T-cell (primary cell): ENCODE measurements at regions of chr4 and their contacts with region 1.

Region 1: GRCh38 chr4:150668824-150669223 is 86.9 kb downstream of the MAB21L2 start:
- DNase-seq: no peak
- ATAC-seq: no peak
- H3K4me3 ChIP-seq: no peak overlapping the region
- H3K4me3 Mint-ChIP-seq: no peak overlapping the region
- H3K27ac ChIP-seq: no peak overlapping the region
- H3K27ac Mint-ChIP-seq: no peak overlapping the region
- H3K4me1 ChIP-seq: no peaks in the 10 kb centered on the region
- H3K4me1 Mint-ChIP-seq: peaks cover 0 to 2% (median 0%) of the 10 kb centered on the region in 3 donors
- H3K27me3 ChIP-seq: no peaks in the 10 kb centered on the region
- H3K27me3 Mint-ChIP-seq: no peaks in the 10 kb centered on the region

Region 2: DNA sequence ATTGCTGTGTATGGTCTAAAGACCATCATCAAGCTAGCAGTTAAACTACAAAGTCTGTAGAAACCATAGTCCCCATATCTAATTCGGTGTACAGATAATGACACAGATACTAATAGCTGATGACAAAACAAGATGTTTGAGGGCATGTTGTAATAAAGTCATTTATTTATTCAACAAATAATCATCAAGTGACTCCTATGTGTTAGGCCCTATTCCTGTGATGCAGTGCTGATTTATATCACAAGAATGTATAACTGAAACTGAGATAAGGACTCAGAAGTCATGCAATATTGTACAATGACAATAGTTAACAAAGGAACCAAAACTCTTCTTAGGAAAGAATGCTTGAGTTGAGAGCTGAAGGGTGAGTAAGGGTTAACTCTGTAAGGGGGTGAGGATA is 1911.7 kb before region 1 on chr4:
- CTCF ChIA-PET with region 1: no interaction called
- POLR2A ChIA-PET with region 1: no interaction called
- DNase-seq: no peak
- ATAC-seq: no peak
- H3K4me3 ChIP-seq: no peak overlapping the region
- H3K4me3 Mint-ChIP-seq: no peak overlapping the region
- H3K27ac ChIP-seq: no peak overlapping the region
- H3K27ac Mint-ChIP-seq: no peak overlapping the region
- H3K4me1 ChIP-seq: no peaks in the 10 kb centered on the region
- H3K4me1 Mint-ChIP-seq: no peaks in the 10 kb centered on the region
- H3K27me3 ChIP-seq: no peaks in the 10 kb centered on the region
- H3K27me3 Mint-ChIP-seq: no peaks in the 10 kb centered on the region

Region 3: GRCh38 chr4:150368667-150369066 is 300.2 kb before region 1 on chr4:
- CTCF ChIA-PET with region 1: no interaction called
- POLR2A ChIA-PET with region 1: interaction called in 1 of 2 experiments, 18 read pairs
- DNase-seq: no peak
- ATAC-seq: no peak
- H3K4me3 ChIP-seq: no peak overlapping the region
- H3K4me3 Mint-ChIP-seq: no peak overlapping the region
- H3K27ac ChIP-seq: no peak overlapping the region
- H3K27ac Mint-ChIP-seq: no peak overlapping the region
- H3K4me1 ChIP-seq: no peaks in the 10 kb centered on the region
- H3K4me1 Mint-ChIP-seq: peaks cover 0 to 6% (median 1%) of the 10 kb centered on the region in 3 donors
- H3K27me3 ChIP-seq: no peaks in the 10 kb centered on the region
- H3K27me3 Mint-ChIP-seq: no peaks in the 10 kb centered on the region

Region 4: GRCh38 chr4:150694438-150694837 is 25.6 kb after region 1 on chr4:
- CTCF ChIA-PET with region 1: no interaction called
- POLR2A ChIA-PET with region 1: no interaction called
- DNase-seq: no peak
- ATAC-seq: no peak
- H3K4me3 ChIP-seq: no peak overlapping the region
- H3K4me3 Mint-ChIP-seq: no peak overlapping the region
- H3K27ac ChIP-seq: no peak overlapping the region
- H3K27ac Mint-ChIP-seq: no peak overlapping the region
- H3K4me1 ChIP-seq: no peaks in the 10 kb centered on the region
- H3K4me1 Mint-ChIP-seq: peaks cover 0 to 3% (median 2%) of the 10 kb centered on the region in 3 donors
- H3K27me3 ChIP-seq: no peaks in the 10 kb centered on the region
- H3K27me3 Mint-ChIP-seq: no peaks in the 10 kb centered on the region